ENCODE measurements at regions of chr2 and their contacts with region 1.

Region 1: GRCh38 chr2:191811807-191812602 is 34.9 kb downstream of the CAVIN2 start:
- DNase-seq: peak; percentile 73
- H3K4me3 ChIP-seq: peak overlapping the region in 1 of 4 donors; percentile 4
- H3K27ac ChIP-seq: no peak overlapping the region
- H3K4me1 ChIP-seq: peaks cover 0 to 3% (median 0%) of the 10 kb centered on the region in 4 donors
- H3K27me3 ChIP-seq: no peaks in the 10 kb centered on the region
- CTCF ChIP-seq: peak; percentile 52 to 77 (median 68)
- EP300 ChIP-seq: no peak
- POLR2A ChIP-seq: no peak

Region 2: DNA sequence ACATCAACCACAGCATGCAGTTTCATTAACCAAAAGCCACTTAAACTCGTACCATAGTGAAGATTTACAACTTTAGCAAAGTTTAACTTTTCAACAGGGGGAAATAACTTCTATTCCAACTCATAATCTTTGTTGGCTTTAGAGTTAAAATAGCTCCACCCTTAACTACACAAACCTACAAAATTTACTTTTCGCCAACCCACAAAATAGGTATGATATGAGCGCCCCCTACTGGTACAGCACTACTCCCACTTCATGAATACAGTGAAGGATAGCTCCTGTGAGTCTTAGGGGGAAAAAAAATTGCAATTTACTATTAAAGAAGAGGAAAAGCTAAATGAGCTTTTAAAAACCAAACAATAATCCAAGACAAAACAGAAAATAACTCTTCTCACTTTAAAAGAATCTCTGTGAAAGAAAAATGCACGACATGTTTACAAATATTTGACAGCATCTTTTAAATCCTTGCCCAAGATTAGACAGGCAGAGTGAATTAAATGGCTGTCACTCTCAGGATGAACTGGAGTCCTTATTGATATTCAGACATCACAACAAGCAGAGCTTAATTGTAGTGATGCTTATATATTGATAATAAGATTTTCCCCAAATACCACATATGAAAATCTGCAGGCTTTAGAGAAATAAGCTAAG is 350.5 kb after region 1 on chr2:
- intact Hi-C with region 1: loop called (anchors 1 kb)
- DNase-seq: peak; percentile 80
- H3K4me3 ChIP-seq: peak overlapping the region in 3 of 4 donors; percentile 8 to 23 (median 18)
- H3K27ac ChIP-seq: no peak overlapping the region
- H3K4me1 ChIP-seq: peaks cover 0 to 6% (median 5%) of the 10 kb centered on the region in 4 donors
- H3K27me3 ChIP-seq: no peaks in the 10 kb centered on the region
- CTCF ChIP-seq: peak; percentile 74 to 96 (median 90)
- EP300 ChIP-seq: no peak
- POLR2A ChIP-seq: no peak

Measured in sigmoid colon (tissue), 7 donors.